ENCODE measurements at regions of chr7 and their contacts with region 1.

Region 1: DNA sequence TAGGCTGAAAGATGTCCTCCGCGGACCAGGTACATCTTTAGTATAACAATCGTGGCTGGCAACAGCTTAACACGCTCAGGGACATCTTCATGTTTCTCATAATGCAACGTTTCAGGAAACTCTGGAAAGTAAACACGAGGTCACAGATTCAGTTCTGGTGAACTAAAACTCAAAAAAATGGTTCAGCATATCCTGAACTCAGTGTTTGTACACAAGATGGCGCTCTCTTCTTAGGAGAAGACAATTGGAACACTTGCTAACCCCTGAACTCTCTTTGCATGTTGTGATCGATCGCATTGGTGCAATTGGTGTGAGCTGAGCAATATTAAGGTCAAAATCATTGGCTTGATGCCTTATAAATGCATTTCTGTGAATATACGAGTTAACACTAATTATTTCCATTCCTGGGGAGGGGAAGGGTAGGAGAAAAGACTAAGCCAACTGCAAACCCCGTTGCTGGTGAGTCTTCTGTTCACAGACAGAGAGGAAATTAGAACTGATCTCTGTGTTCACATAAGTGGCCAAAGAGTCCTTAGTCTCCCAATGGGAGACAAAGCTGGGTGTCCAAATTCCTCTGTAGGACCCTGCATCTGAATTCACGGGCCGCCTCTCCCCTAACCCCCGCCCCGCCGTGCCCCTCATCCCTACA is 52.6 kb upstream of the FAM180A start:
- DNase-seq: peak; percentile 71
- H3K4me3 Mint-ChIP-seq: no peak overlapping the region
- H3K27ac Mint-ChIP-seq: no peak overlapping the region
- H3K4me1 Mint-ChIP-seq: peaks cover 15% of the 10 kb centered on the region
- H3K27me3 Mint-ChIP-seq: no peaks in the 10 kb centered on the region
- CTCF ChIP-seq: peak; percentile 76

Region 2: DNA sequence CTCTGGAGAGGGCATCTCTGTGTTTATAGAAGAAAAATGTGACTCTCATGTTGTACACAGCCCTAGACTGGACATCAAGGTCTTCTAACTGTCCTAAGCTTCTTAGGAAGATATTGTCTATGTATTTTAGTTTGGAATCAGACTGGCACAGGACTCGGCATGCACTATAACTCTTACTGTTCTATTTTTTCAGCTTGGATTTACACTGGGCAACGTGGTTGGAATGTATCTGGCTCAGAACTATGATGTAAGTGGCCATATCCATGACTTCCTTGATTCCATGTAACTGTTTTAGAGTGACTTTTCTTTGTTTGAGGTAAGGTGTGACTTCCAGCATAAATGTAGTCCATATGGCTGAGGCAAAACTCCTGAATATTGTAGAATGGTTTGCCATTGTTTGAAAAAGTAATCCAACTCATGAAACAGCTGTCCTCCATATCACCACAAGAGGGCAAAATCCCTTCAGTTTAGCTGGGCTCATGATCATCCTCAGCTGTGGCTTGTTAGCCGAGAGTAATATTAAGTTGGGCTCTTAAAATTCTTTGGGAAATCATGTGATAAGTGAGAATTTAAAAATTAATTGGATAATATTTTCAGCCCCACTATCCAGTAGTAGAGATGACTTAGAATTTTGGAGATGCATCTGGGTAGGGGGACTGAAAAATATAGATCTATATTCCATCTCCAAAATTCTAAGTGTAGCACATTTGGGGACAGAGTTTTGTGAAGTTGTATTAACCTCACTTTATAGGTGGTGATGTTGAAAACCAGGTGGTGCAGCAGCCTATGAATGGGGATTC is 128.4 kb before region 1 on chr7:
- CTCF ChIA-PET with region 1: interaction called, 171 read pairs
- POLR2A ChIA-PET with region 1: interaction called, 3 read pairs
- intact Hi-C with region 1: loop called (anchors 1 kb)
- DNase-seq: peak; percentile 77
- H3K4me3 Mint-ChIP-seq: no peak overlapping the region
- H3K27ac Mint-ChIP-seq: peak overlapping the region; percentile 46
- H3K4me1 Mint-ChIP-seq: peaks cover 37% of the 10 kb centered on the region
- H3K27me3 Mint-ChIP-seq: no peaks in the 10 kb centered on the region
- CTCF ChIP-seq: peak; percentile 67

Region 3: GRCh38 chr7:135901585-135902540 is 100.7 kb after region 1 on chr7:
- CTCF ChIA-PET with region 1: no interaction called
- POLR2A ChIA-PET with region 1: no interaction called
- intact Hi-C with region 1: no loop called
- DNase-seq: no peak
- H3K4me3 Mint-ChIP-seq: no peak overlapping the region
- H3K27ac Mint-ChIP-seq: no peak overlapping the region
- H3K4me1 Mint-ChIP-seq: no peaks in the 10 kb centered on the region
- H3K27me3 Mint-ChIP-seq: no peaks in the 10 kb centered on the region
- CTCF ChIP-seq: no peak

Region 4: DNA sequence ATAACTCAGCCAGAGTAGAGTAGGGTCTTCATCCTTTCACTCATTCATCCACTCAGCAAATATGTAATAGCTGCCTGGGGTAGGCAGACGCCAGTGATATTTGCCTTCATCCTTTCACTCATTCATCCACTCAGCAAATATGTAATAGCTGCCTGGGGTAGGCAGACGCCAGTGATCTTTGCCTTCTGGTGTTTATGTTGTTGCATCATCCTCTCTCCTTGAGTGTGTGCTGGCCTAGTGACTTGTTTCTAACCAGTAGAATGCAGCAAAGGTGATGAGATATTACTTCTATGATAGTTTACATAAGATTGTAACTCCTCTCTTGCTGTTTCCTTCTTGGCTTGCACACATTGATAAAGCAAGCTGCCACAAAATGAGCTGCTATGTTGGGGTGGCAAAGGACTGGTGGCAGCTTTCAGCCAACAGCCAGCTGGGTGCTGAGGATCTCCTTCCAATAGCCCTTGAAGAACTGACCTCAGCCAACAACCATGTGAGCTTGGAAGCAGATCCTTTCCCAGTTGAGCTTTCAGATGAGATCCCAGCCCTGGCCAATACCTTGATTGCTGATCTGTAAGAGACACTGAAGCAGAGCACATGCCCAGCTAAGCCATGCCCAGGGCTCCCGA is 199.2 kb after region 1 on chr7:
- CTCF ChIA-PET with region 1: interaction called, 183 read pairs
- POLR2A ChIA-PET with region 1: no interaction called
- intact Hi-C with region 1: no loop called
- DNase-seq: no peak
- H3K4me3 Mint-ChIP-seq: no peak overlapping the region
- H3K27ac Mint-ChIP-seq: no peak overlapping the region
- H3K4me1 Mint-ChIP-seq: peaks cover 15% of the 10 kb centered on the region
- H3K27me3 Mint-ChIP-seq: no peaks in the 10 kb centered on the region
- CTCF ChIP-seq: no peak

Region 5: GRCh38 chr7:136023134-136023875 is 222.1 kb after region 1 on chr7:
- CTCF ChIA-PET with region 1: interaction called, 11 read pairs
- POLR2A ChIA-PET with region 1: no interaction called
- intact Hi-C with region 1: no loop called
- DNase-seq: no peak
- H3K4me3 Mint-ChIP-seq: no peak overlapping the region
- H3K27ac Mint-ChIP-seq: no peak overlapping the region
- H3K4me1 Mint-ChIP-seq: no peaks in the 10 kb centered on the region
- H3K27me3 Mint-ChIP-seq: peaks cover 24% of the 10 kb centered on the region
- CTCF ChIP-seq: no peak

Region 6: GRCh38 chr7:136874238-136875032 is 1073.3 kb after region 1 on chr7:
- CTCF ChIA-PET with region 1: no interaction called
- POLR2A ChIA-PET with region 1: no interaction called
- intact Hi-C with region 1: loop called (anchors 5 kb)
- DNase-seq: peak; percentile 34
- H3K4me3 Mint-ChIP-seq: no peak overlapping the region
- H3K27ac Mint-ChIP-seq: no peak overlapping the region
- H3K4me1 Mint-ChIP-seq: no peaks in the 10 kb centered on the region
- H3K27me3 Mint-ChIP-seq: peaks cover 23% of the 10 kb centered on the region
- CTCF ChIP-seq: peak; percentile 30